ENCODE measurements at regions of chr12 and their contacts with region 1.

Region 1: GRCh38 chr12:25958428-25959070 is at the start of gene RASSF8:
- DNase-seq: peak; percentile 66
- H3K4me3 ChIP-seq: peak within 1 kb of the TSS; percentile 76 to 81
- H3K27ac ChIP-seq: peak within 1 kb of the TSS; percentile 80 to 96
- H3K4me1 ChIP-seq: peaks cover 13% of the 10 kb centered on the region
- H3K27me3 ChIP-seq: no peaks in the 10 kb centered on the region
- CTCF ChIP-seq: no peak
- POLR2A ChIP-seq: no peak
- total RNA-seq, gene RASSF8: 71.7 to 93.5 TPM

Region 2: GRCh38 chr12:25583545-25583944 is 375.0 kb before region 1 on chr12:
- intact Hi-C with region 1: loop called (anchors 5 kb)
- DNase-seq: peak; percentile 65
- H3K4me3 ChIP-seq: no peak overlapping the region
- H3K27ac ChIP-seq: no peak overlapping the region
- H3K4me1 ChIP-seq: peaks cover 17% of the 10 kb centered on the region
- H3K27me3 ChIP-seq: no peaks in the 10 kb centered on the region
- CTCF ChIP-seq: no peak
- POLR2A ChIP-seq: no peak

Region 3: GRCh38 chr12:25864306-25865276 is 94.0 kb before region 1 on chr12:
- intact Hi-C with region 1: no loop called
- DNase-seq: no peak
- H3K4me3 ChIP-seq: no peak overlapping the region
- H3K27ac ChIP-seq: no peak overlapping the region
- H3K4me1 ChIP-seq: no peaks in the 10 kb centered on the region
- H3K27me3 ChIP-seq: no peaks in the 10 kb centered on the region
- CTCF ChIP-seq: no peak
- POLR2A ChIP-seq: no peak